Vagina (tissue), 2 donors: ENCODE measurements at regions of chr12 and their contacts with region 1.

Region 1: DNA sequence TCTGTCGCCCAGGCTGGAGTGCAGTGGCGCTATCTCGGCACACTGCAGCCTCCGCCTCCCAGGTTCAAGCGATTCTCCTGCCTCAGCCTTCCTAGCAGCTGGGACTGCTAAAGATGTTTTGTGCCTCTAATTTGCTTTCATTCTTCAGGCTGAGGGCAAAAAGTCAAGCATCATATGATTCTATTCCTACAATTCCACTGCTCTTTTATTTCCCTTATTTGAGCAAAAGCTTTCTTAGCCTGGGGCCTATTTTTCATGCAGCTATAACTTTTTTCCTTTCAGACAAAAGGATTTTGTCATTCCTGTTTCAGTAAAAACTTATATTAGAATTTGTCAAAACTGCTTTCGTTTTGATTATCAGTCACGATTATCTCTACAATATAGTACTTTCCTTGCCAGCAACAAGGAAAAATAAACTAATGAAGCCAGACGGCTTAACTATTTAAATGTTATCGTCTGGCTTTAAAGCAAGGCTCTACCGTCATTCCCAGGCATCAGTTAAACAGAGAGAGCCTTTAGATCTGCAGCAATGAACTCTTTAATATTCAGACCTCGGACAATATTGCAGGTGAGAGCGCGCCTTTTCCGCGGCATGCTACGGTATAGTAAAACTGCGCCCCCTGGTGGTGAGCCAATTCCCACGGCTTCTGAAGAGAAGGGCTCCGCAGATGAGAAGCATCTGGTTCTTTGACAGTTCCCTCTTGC is 1.4 kb upstream of the SLC2A13 start:
- DNase-seq: no peak
- H3K4me3 ChIP-seq: peak overlapping the region; percentile 60 to 90
- H3K27ac ChIP-seq: peak overlapping the region; percentile 87
- H3K4me1 ChIP-seq: peaks cover 25% of the 10 kb centered on the region
- H3K27me3 ChIP-seq: no peaks in the 10 kb centered on the region
- CTCF ChIP-seq: peak; percentile 72 to 96 (median 86)
- POLR2A ChIP-seq: no peak

Region 2: GRCh38 chr12:39772708-39773665 is 334.3 kb before region 1 on chr12:
- intact Hi-C with region 1: loop called (anchors 5 kb)
- DNase-seq: no peak
- H3K4me3 ChIP-seq: no peak overlapping the region
- H3K27ac ChIP-seq: no peak overlapping the region
- H3K4me1 ChIP-seq: no peaks in the 10 kb centered on the region
- H3K27me3 ChIP-seq: no peaks in the 10 kb centered on the region
- CTCF ChIP-seq: no peak
- POLR2A ChIP-seq: no peak

Region 3: GRCh38 chr12:40010899-40011774 is 96.1 kb before region 1 on chr12:
- intact Hi-C with region 1: loop called (anchors 5 kb)
- DNase-seq: no peak
- H3K4me3 ChIP-seq: no peak overlapping the region
- H3K27ac ChIP-seq: no peak overlapping the region
- H3K4me1 ChIP-seq: no peaks in the 10 kb centered on the region
- H3K27me3 ChIP-seq: no peaks in the 10 kb centered on the region
- CTCF ChIP-seq: peak; percentile 38 to 54 (median 49)
- POLR2A ChIP-seq: no peak

Region 4: DNA sequence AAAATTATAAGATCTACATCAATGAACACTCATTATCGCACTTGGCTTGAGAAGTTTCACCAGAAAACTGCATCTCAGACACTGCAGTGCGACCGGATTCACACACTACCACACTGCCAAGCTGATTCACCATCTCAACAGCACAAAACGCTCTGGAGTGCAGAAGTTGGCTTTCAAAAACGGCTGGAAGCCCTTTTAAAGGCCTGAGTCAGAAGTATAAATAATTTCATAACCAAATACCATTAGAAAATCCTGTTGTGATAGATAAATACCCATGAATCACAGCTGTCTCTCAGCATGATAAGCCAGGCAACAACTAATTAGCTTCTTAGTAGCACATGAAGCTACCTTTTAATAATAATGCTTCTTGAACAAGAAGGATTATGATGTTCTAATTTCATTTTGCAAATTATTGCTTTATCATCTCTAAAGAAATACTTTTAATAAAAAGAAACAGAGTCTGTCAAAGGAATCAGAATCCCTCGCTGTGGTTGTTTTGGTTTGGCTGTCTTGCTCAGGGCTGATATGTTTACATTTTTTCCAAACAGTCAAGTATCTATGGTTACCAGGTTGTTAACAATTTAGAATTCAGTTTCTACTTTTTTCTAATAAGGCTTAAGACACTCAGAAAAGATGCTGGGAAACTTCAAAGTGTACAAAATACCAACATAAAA is 52.6 kb before region 1 on chr12:
- intact Hi-C with region 1: no loop called
- DNase-seq: no peak
- H3K4me3 ChIP-seq: peak overlapping the region in 1 of 2 donors; percentile 0
- H3K27ac ChIP-seq: peak overlapping the region; percentile 20
- H3K4me1 ChIP-seq: peaks cover 6% of the 10 kb centered on the region
- H3K27me3 ChIP-seq: no peaks in the 10 kb centered on the region
- CTCF ChIP-seq: no peak
- POLR2A ChIP-seq: no peak

Region 5: GRCh38 chr12:41188058-41188840 is 1081.0 kb after region 1 on chr12 and contains the start of gene PDZRN4:
- intact Hi-C with region 1: loop called (anchors 10 kb)
- DNase-seq: no peak
- H3K4me3 ChIP-seq: peak within 1 kb of the TSS; percentile 48 to 50
- H3K27ac ChIP-seq: peak within 1 kb of the TSS; percentile 56
- H3K4me1 ChIP-seq: peaks cover 27% of the 10 kb centered on the region
- H3K27me3 ChIP-seq: no peaks in the 10 kb centered on the region
- CTCF ChIP-seq: no peak
- POLR2A ChIP-seq: no peak
- total RNA-seq, gene PDZRN4: 24.8 TPM